Activated CD4-positive, alpha-beta T cell treated with anti-CD3 and anti-CD28 coated beads, Interleukin-2, amount 10 ng/mL, durations not matched to agents 7 days and 5 days (primary cell): ENCODE measurements at regions of chr2 and their contacts with region 1.

Region 1: DNA sequence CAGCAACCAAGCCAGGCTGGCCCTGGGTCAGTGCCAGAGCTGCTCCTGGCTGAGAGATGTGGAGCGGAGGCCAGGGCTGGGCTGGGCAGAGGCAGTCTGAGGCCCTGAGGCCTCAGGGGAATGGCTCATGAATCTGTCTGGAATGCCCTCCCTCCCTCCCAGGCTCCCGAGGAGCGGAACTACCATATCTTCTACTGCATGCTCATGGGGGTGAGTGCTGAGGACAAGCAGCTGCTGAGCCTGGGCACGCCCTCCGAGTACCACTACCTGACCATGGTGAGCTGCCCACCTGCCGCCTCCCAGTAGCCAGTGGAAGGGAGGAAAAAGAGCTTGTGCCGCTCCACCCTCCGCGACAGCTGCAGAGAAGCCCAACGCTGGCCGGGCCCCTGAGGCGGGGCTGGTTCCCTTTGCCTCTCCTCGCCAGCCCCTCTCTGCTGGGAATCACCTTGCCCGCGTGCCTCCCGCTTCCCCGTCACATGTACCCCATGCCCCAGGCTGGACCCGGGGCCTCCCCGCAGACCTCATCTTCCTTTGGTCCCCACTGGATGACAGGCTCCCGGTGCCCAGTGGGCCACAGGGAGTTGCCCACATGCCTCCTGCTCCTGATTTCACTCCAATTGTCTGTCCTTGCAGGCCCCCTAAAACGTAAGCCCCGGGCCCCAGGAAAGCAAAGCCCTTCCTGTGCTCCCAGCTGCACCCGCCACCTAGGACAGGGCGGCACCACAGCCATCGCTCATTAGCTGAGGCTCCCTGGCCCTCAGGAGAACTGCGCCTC is 41.1 kb downstream of the MYO7B start:
- DNase-seq: peak; percentile 3
- H3K4me3 Mint-ChIP-seq: no peak overlapping the region
- H3K27ac Mint-ChIP-seq: peak overlapping the region; percentile 81
- H3K4me1 Mint-ChIP-seq: peaks cover 22% of the 10 kb centered on the region
- H3K27me3 Mint-ChIP-seq: peaks cover 11% of the 10 kb centered on the region

Region 2: DNA sequence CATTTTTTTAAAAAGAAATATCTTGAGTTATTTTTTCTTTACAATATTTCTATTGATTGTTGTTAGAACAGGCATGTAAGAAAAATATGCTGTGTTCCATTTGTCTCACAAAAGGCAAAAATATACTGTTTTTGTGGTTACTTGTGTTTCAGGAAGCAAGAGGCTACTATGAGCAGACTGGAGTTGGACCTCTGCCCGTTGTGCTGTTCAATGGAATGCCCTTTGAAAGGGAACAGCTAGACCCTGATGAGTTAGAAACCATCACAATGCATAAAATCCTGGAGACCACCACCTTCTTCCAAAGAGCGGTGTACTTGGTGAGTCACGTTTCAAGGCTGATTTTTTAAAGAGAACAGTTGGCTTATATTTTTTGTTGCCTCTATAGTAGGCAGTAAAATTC is 569.0 kb after region 1 on chr2:
- CTCF ChIA-PET with region 1: no interaction called
- POLR2A ChIA-PET with region 1: interaction called, 13 read pairs
- DNase-seq: no peak
- H3K4me3 Mint-ChIP-seq: no peak overlapping the region
- H3K27ac Mint-ChIP-seq: no peak overlapping the region
- H3K4me1 Mint-ChIP-seq: no peaks in the 10 kb centered on the region
- H3K27me3 Mint-ChIP-seq: no peaks in the 10 kb centered on the region